Colonic mucosa (tissue), 4 donors: ENCODE measurements at regions of chr10 and their contacts with region 1.

Region 1: DNA sequence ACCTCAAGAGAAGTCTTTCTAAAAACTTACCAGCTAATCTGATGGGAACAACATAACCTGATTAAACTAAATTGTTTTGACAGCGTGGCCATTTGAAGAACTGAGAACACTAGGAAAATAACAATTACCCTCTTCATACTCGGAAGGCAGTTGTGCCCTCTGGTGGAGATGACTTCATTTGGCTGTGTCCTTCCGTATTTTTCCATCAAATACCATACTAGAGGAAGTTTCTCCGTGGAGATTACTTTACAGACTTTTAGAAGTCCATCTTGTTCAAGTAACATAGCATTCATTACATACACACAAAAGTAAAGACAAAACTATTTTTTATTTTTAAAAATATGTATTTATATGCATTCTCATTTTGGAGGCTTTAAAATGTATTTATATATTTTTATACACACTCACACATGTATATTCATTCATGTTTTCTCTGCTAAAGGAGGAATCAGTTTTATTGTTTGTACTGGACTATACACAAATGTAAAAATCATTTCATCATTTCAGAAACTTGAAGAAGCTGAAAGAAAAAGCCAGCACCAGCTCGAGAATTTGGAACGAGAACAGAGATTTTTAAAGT is 25.2 kb downstream of the SMNDC1 start:
- DNase-seq: peak; percentile 65
- H3K4me3 ChIP-seq: no peak overlapping the region
- H3K27ac ChIP-seq: no peak overlapping the region
- H3K4me1 ChIP-seq: peaks cover 3% of the 10 kb centered on the region
- H3K27me3 ChIP-seq: no peaks in the 10 kb centered on the region
- CTCF ChIP-seq: peak; percentile 60

Region 2: DNA sequence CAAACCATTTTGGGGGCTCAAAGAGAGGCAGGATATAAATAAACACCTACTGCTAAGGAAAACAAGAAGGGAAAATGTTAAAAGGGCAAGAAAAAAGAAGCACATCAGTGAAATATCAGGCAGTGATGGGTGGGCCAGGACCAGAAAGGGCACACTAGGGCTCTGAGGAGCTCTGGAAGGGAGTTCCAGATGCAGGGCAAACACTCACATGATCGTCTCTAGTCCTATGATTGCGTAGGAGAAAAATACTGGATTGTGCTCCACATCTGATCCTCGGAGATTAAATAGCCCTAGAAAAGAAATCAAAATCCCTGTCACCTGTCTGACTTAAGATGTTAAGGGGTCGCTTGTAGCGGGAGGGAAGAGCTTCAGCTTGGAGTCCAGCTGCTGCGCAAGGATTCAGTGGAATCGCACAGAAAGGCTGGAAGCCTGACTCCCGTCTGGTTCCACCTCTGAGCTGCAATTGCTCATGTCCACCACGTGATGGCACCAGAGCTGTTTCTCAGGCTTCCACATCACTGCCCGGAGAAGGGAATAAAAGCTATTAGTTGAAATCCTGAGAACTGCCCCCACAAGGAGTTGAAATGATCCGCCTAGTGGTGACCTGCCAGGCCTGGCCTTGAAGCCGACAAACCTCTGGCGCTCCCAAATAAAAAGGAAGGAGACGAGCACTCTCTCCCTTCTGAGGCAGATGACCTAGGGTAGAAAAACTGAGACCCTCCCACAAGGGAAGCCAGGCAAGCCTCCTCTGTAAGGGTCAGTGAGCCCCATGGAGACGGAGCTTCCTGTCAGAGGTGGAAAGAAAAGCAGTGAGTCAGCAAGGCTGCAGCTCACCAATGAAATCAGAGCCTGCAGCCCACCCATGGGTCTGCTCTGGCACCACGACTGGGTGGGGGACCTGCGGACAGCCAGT is 395.4 kb before region 1 on chr10:
- intact Hi-C with region 1: loop called (anchors 10 kb)
- DNase-seq: peak; percentile 58
- H3K4me3 ChIP-seq: no peak overlapping the region
- H3K27ac ChIP-seq: no peak overlapping the region
- H3K4me1 ChIP-seq: no peaks in the 10 kb centered on the region
- H3K27me3 ChIP-seq: no peaks in the 10 kb centered on the region
- CTCF ChIP-seq: peak; percentile 93

Region 3: DNA sequence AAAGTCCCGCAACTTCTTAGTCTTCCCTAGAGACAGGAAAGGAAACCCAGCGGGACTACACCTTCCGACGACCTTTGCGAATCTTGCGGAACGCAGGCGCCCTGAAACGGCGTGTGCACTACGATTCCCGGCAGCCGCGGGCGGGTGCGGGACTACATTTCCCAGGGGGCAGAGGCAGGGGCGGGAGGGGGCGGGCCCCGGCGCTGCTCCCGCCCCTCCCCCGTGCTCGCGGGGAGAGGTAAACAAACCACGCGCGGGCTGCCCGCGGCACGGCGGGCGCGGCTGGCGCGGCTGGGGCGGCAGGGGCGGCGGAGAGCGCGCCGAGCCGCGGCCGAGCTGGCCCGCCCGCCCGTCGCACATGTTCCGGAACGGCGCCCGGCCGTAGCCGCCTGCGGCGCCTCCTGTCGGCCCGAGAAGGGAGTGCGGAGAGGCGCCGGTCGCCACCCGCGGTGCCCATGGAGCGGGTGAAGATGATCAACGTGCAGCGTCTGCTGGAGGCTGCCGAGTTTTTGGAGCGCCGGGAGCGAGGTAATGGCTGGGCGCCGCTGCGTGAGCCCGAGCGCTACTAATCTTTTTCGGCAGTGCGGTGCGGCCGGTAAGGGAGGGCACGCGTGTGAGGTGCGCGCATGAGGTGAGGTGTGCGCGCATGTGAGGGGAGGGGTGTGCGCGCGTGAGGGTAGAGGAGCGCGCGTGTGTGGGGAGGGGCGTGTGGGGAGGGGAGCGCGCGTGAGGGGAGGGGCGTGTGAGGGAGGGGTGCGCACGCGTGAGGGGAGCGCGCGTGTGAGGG is 53.5 kb before region 1 on chr10:
- intact Hi-C with region 1: loop called (anchors 5 kb)
- DNase-seq: peak; percentile 93
- H3K4me3 ChIP-seq: peak overlapping the region; percentile 56
- H3K27ac ChIP-seq: peak overlapping the region; percentile 91
- H3K4me1 ChIP-seq: no peaks in the 10 kb centered on the region
- H3K27me3 ChIP-seq: no peaks in the 10 kb centered on the region
- CTCF ChIP-seq: peak; percentile 59

Region 4: DNA sequence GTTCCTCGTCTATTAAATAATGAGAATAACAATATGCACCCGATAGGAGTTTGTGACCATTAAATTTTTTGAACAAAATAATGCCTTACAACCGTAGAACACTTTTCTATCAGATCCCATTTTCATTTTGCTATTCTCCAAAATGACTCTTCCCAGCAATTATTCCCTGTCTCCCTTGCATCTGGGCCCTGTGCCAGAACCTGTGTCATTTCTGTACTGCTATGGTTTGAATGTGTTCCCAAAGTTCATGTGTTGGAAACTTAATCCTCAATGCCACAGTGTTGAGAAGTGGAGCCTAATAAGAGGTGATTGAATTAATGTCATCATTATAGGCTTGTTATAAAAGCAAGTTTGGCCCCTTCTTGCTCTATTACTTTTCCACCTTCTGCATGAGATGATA is 58.4 kb after region 1 on chr10:
- intact Hi-C with region 1: no loop called
- DNase-seq: no peak
- H3K4me3 ChIP-seq: no peak overlapping the region
- H3K27ac ChIP-seq: no peak overlapping the region
- H3K4me1 ChIP-seq: no peaks in the 10 kb centered on the region
- H3K27me3 ChIP-seq: no peaks in the 10 kb centered on the region
- CTCF ChIP-seq: no peak